ENCODE measurements at regions of chr3 and their contacts with region 1.

Region 1: GRCh38 chr3:150183678-150184425 is 213.2 kb upstream of the PFN2 start:
- DNase-seq: peak; percentile 40
- H3K4me3 ChIP-seq: peak overlapping the region; percentile 52
- CTCF ChIP-seq: peak; percentile 75

Region 2: DNA sequence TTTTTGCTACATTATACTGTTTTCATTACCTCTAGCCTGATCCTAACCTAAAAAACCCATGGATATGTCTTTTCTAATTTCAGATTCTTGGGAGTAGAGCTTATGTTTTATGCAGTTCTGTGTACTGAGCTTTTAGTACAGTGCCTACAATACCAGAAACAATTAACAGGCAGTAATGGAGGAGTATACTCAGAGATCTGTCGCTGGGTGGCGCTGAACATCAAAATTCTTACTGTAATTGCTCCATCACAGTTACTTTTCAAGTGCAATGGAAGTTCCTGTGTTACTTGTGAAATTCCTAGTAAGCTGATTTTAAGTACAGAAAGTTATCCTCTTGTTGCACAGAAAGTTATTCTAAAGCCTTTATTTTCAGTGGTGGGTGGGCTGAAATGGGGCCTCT is 304.0 kb before region 1 on chr3:
- CTCF ChIA-PET with region 1: interaction called, 13 read pairs
- POLR2A ChIA-PET with region 1: no interaction called
- DNase-seq: no peak
- H3K4me3 ChIP-seq: no peak overlapping the region
- CTCF ChIP-seq: peak; percentile 68

Region 3: DNA sequence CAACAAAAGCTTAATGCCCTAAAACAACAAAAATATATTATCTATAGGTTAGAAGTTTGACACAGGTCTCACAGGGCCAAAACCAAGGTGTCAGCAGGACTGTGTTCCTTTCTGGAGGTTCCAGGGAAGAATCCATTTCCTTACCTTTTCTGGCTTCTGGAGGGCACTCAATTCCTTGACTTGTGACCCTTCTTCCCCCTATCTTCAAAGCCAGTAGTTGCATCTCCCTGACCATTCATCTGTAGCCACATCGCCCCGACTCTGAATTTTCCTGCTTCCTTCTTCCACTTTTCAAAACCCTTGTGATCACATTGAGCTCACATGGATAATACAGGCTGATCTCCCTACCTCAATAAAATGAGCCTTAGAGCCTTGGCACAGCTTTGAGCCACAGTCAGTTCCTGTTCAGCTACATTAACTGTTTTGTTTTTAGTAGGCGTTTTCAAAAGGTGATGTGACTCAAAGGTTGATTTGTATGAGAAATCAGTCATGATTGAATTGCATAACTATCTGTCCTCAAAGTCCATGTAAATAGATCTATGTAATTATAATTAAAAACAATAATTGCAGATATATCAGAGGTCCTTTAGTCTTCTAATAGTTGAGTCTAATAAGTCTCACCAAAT is 225.6 kb before region 1 on chr3:
- CTCF ChIA-PET with region 1: interaction called, 155 read pairs
- POLR2A ChIA-PET with region 1: no interaction called
- DNase-seq: no peak
- H3K4me3 ChIP-seq: no peak overlapping the region
- CTCF ChIP-seq: no peak

Region 4: GRCh38 chr3:149975919-149976318 is 207.9 kb before region 1 on chr3:
- CTCF ChIA-PET with region 1: interaction called, 155 read pairs
- POLR2A ChIA-PET with region 1: interaction called, 9 read pairs
- DNase-seq: no peak
- H3K4me3 ChIP-seq: no peak overlapping the region
- CTCF ChIP-seq: no peak

Region 5: DNA sequence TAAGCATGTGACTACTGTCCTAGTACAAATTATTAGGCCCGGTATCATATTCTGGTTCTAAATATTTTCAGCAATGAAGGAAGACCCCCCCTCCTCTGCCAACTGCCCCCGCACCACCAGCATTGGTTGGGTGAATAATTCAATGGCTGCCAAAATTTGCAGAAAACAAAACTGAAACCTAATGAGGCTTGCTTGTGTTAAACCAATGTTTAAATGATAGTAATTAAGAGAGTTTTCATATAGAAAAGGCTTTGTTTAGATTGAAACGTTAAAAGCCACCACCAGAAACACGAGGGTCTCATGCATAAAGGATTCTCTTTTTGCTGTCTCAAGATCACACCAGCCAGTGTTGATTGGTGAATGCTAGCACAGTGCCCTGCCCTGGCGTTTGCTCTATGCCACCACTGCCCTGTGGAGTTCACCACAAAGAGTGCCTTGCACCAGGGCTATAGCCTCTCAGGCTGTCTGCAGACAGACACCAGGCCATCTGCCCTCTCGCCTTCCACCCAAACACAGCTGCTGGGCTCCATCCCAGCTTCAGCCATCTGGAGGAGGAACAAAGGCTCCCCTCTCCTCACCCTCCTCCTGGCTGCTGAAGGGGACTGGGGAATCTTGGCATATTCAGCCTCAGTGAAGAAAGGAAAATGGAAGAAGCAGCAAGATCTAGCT is 12.9 kb before region 1 on chr3:
- CTCF ChIA-PET with region 1: interaction called, 29 read pairs
- POLR2A ChIA-PET with region 1: no interaction called
- DNase-seq: no peak
- H3K4me3 ChIP-seq: no peak overlapping the region
- CTCF ChIP-seq: no peak

Region 6: DNA sequence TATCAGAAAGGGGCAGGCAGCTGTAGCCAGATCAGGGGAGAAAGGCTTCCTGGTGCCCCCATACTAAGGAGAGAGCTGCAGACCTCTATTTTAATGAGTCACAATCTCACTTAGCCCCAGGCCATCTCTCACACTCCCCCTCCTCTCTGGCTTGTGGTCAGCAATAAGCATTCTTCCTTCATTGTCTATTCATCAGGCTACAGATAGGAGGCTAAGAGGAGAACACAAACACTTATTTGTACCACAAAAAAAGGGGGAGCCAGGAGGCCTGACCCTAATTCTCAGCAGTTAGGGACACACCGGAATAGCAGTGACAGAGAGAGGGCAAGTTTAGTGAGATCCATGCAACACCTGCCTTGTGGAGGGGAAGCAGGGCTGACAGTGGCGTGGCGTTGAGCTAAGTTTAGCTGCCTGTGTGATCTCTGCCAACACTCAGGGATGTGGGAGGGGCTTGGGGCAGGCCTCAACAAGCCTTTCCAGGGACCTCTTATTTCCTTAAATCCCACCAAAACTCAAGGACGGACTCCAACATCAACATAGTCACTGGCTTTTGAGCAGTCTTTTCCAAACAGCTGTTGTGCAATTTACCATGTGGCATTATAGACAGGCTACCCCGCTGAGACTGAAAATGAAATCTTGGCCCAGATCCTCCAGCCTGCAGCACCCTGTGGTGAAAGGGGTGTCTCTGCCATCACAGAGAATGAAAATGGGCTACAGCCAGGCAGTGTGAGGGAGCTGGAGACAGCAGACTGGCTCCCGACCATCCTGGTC is 32.4 kb after region 1 on chr3:
- CTCF ChIA-PET with region 1: interaction called, 13 read pairs
- POLR2A ChIA-PET with region 1: no interaction called
- DNase-seq: peak; percentile 68
- H3K4me3 ChIP-seq: no peak overlapping the region
- CTCF ChIP-seq: no peak

Region 7: GRCh38 chr3:150469943-150470738 is 286.3 kb after region 1 on chr3:
- CTCF ChIA-PET with region 1: no interaction called
- POLR2A ChIA-PET with region 1: no interaction called
- DNase-seq: no peak
- H3K4me3 ChIP-seq: no peak overlapping the region
- CTCF ChIP-seq: no peak

Measured in AG04449 (cell line).